HCT116 (cell line): ENCODE measurements at regions of chr7 and their contacts with region 1.

Region 1: DNA sequence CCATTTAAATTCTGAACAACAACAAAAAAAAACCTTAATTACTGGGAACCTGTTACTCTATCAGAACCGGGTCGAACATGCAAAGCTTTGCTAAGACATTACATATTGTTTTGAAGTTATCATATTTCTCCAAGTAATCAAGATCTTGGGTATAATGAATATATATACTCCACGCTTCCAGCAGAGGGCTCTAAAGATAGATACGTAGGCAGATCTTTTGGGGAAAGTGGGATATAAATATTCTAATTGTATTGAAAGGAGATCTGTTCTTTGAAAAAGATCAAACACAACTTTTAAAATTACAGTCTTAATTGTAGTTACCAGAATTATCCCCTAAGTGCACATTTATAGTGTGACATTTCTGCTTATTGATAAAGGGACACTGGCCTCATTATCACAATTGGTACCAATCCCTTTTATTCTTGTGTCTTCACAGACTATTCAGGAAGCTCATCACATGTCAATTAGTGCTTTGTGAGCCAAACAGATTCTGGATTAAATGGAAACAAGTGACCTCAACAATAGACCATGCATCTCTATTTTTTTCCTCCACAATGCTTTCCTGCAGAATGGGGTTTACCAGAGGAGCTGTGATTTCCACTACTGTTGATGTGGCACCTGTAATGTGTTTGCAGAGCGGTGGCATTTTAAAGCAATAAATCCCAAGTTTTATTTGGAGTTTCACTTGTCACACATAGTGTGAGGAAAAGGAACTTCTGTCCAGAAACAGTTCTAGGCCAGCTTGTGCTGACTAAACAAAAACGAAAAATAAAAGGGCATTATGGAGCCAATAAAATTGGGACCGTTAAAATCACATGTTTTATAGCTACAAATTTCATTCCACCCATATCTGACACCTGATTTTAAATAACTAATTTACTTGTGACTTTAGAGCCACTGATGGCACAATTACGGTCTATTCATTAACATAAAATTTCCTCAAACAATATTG is 122.4 kb downstream of the CTTNBP2 start:
- DNase-seq: no peak
- ATAC-seq: no peak
- H3K4me3 ChIP-seq: no peak overlapping the region
- H3K27ac ChIP-seq: no peak overlapping the region
- H3K4me1 ChIP-seq: no peaks in the 10 kb centered on the region
- H3K27me3 ChIP-seq: no peaks in the 10 kb centered on the region
- CTCF ChIP-seq: peak; percentile 38 to 70 (median 52); a peak in 5 of 6 replicates
- POLR2A ChIP-seq: no peak
- RAD21 ChIP-seq: peak; percentile 59

Region 2: DNA sequence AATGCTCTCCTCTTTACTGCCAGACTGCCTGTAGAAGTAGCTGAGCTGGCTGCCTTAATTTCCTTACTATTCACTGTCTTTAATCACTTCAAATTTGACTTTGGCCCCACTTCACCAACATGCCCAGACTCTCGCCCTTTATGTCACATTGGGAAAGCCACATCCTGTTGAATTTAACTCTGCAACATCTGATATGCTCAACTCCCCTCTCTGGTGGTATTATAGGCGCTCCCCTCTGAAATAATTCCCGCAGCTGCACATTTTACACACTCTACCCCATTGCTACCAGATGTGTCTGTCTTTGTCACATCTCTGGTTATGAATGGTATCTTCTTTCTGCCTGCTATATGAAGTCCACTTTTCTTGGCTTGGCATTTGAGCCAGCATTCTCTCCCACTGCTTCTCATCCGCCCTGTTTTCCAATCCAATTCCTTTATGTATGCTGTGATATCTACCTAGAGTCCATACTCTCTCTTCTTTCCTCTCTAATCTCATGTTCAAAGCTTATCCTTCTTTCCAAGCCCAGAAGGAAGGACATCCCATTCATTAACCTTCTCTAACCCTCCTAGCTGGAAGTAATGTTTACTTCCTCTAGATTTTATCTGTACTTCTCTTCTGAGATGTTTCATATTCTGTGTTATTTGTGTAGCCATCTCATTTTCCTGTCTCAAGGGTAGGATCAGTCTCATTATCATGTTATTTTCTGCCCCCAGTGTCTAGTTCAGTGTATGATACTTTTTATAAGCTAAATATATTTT is 663.1 kb before region 1 on chr7:
- CTCF ChIA-PET with region 1: no interaction called
- POLR2A ChIA-PET with region 1: no interaction called
- RAD21 ChIA-PET with region 1: no interaction called
- intact Hi-C with region 1: no loop called
- DNase-seq: no peak
- ATAC-seq: no peak
- H3K4me3 ChIP-seq: no peak overlapping the region
- H3K27ac ChIP-seq: no peak overlapping the region
- H3K4me1 ChIP-seq: no peaks in the 10 kb centered on the region
- H3K27me3 ChIP-seq: no peaks in the 10 kb centered on the region
- CTCF ChIP-seq: no peak
- POLR2A ChIP-seq: no peak
- RAD21 ChIP-seq: no peak

Region 3: GRCh38 chr7:117659453-117660086 is 91.3 kb before region 1 on chr7:
- CTCF ChIA-PET with region 1: no interaction called
- POLR2A ChIA-PET with region 1: no interaction called
- RAD21 ChIA-PET with region 1: no interaction called
- intact Hi-C with region 1: no loop called
- DNase-seq: no peak
- ATAC-seq: no peak
- H3K4me3 ChIP-seq: no peak overlapping the region
- H3K27ac ChIP-seq: no peak overlapping the region
- H3K4me1 ChIP-seq: no peaks in the 10 kb centered on the region
- H3K27me3 ChIP-seq: no peaks in the 10 kb centered on the region
- CTCF ChIP-seq: no peak
- POLR2A ChIP-seq: no peak
- RAD21 ChIP-seq: no peak

Region 4: GRCh38 chr7:117737926-117738325 is 13.0 kb before region 1 on chr7:
- CTCF ChIA-PET with region 1: no interaction called
- POLR2A ChIA-PET with region 1: no interaction called
- RAD21 ChIA-PET with region 1: no interaction called
- intact Hi-C with region 1: no loop called
- DNase-seq: no peak
- ATAC-seq: no peak
- H3K4me3 ChIP-seq: no peak overlapping the region
- H3K27ac ChIP-seq: no peak overlapping the region
- H3K4me1 ChIP-seq: no peaks in the 10 kb centered on the region
- H3K27me3 ChIP-seq: no peaks in the 10 kb centered on the region
- CTCF ChIP-seq: no peak
- POLR2A ChIP-seq: no peak
- RAD21 ChIP-seq: no peak

Region 5: DNA sequence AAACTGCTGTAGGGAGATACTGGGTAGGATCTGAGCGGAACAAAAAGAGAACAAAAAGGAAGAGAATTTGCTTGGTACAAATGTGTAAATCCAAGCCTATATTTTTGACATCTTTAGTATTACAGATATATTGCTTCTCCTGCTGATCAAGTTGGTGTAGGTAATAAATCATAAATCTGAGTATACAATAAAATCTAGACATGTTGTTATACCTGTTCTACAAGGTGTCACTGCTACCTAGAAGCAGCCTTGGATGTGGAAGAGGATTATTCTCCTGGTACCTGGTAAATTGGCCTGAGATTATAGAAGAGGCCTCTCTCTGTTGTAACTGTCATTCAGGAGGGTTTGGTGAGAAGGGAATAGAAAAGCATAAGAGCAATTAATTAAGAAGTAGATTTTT is 343.2 kb after region 1 on chr7:
- CTCF ChIA-PET with region 1: no interaction called
- POLR2A ChIA-PET with region 1: no interaction called
- RAD21 ChIA-PET with region 1: no interaction called
- intact Hi-C with region 1: no loop called
- DNase-seq: no peak
- ATAC-seq: no peak
- H3K4me3 ChIP-seq: no peak overlapping the region
- H3K27ac ChIP-seq: no peak overlapping the region
- H3K4me1 ChIP-seq: no peaks in the 10 kb centered on the region
- H3K27me3 ChIP-seq: no peaks in the 10 kb centered on the region
- CTCF ChIP-seq: no peak
- POLR2A ChIP-seq: no peak
- RAD21 ChIP-seq: no peak

Region 6: DNA sequence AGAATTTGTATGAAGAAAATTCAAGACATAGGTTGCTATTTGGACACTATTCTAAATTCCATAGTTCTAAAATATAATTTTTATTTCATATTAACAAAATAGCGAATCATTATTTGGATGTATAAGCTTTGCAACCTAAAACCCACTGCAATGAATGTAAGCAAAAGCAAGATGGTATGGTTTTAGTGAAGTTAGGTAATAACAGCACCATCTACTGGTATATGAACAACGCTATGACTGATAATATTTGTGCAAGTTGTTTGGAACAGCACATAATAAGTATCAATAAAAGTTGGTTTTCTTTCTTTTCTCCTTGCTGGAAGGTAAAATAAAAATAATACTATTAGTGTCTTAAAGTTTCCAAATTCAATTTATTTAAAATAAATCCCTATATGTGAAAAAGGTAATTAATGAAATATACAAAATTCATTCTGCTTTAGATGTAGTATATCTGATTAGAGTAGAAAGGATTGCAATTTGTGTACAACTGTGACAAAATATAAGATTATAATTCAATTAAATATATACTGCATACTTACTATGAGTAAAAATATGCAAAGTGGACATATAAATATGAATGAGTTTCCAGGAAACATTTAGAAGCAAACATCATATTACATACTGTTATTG is 354.0 kb after region 1 on chr7:
- CTCF ChIA-PET with region 1: interaction called, 4 read pairs
- POLR2A ChIA-PET with region 1: no interaction called
- RAD21 ChIA-PET with region 1: no interaction called
- intact Hi-C with region 1: loop called (anchors 1 kb)
- DNase-seq: peak; percentile 15
- ATAC-seq: peak; percentile 86
- H3K4me3 ChIP-seq: no peak overlapping the region
- H3K27ac ChIP-seq: no peak overlapping the region
- H3K4me1 ChIP-seq: no peaks in the 10 kb centered on the region
- H3K27me3 ChIP-seq: no peaks in the 10 kb centered on the region
- CTCF ChIP-seq: peak; percentile 36 to 61 (median 58); a peak in 5 of 6 replicates
- POLR2A ChIP-seq: no peak
- RAD21 ChIP-seq: peak; percentile 68

Region 7: GRCh38 chr7:118153551-118154177 is 402.8 kb after region 1 on chr7:
- CTCF ChIA-PET with region 1: interaction called, 12 read pairs
- POLR2A ChIA-PET with region 1: no interaction called
- RAD21 ChIA-PET with region 1: no interaction called
- intact Hi-C with region 1: loop called (anchors 2 kb)
- DNase-seq: peak; percentile 28
- ATAC-seq: peak; percentile 54; the same call in 1 of the 2 replicates
- H3K4me3 ChIP-seq: no peak overlapping the region
- H3K27ac ChIP-seq: no peak overlapping the region
- H3K4me1 ChIP-seq: no peaks in the 10 kb centered on the region
- H3K27me3 ChIP-seq: no peaks in the 10 kb centered on the region
- CTCF ChIP-seq: peak; percentile 47 to 83 (median 61); a peak in 5 of 6 replicates
- POLR2A ChIP-seq: no peak
- RAD21 ChIP-seq: peak; percentile 74

Region 8: DNA sequence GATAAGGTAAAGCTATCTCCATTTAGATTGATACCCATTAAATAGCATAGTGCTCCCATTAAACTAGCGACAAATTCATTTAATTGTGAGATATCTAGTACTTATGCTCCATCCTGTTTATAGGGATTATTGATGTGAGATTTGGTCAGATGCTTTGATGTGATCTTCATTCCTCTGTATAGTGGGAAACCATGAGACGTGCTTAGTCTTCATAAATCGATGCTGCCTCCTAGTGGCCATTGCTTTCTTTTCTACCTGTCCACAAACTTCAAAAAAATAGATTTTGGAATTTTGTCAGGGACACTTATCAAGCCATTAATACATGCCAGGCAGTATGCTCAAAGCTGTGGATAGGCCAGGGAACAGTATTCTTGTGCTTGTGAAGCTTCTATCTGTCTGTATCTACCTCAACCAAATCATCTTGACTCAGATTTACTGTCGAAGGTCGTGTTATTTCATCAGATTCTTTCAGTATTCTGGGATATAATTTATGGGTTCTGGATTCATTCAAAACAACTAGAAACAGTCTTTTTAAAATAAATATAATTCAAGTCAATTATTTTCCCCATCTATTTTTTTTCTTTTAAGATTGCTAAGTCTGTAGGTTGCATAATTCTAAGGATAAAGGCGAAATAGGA is 445.1 kb after region 1 on chr7:
- CTCF ChIA-PET with region 1: no interaction called
- POLR2A ChIA-PET with region 1: no interaction called
- RAD21 ChIA-PET with region 1: no interaction called
- intact Hi-C with region 1: loop called (anchors 2 kb)
- DNase-seq: peak; percentile 64
- ATAC-seq: peak; percentile 90
- H3K4me3 ChIP-seq: no peak overlapping the region
- H3K27ac ChIP-seq: no peak overlapping the region
- H3K4me1 ChIP-seq: no peaks in the 10 kb centered on the region
- H3K27me3 ChIP-seq: no peaks in the 10 kb centered on the region
- CTCF ChIP-seq: peak; percentile 36 to 87 (median 62); a peak in 5 of 6 replicates
- POLR2A ChIP-seq: no peak
- RAD21 ChIP-seq: peak; percentile 63